ENCODE measurements at regions of chr21 and their contacts with region 1.

Region 1: DNA sequence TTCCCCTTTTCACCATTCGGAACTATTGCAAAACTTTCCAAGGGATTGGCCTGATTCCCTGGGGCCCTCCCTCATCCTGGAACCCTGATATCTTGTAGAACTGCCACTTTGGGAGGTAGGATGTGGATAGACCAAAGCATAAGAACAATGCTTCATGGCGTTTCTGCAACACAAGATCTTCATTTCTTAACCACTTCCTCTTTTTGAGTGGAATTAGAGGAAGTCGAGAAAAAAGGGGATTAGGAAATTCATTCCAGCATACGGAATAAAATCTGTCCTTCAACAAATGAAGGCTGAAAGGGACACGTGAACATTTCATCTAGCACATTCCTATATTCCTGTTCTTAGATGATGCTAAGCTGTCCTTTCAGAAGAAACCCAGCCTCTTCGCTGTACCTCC is 149.3 kb downstream of the HUNK start:
- DNase-seq: no peak
- ATAC-seq: no peak
- H3K4me3 ChIP-seq: no peak overlapping the region
- H3K27ac ChIP-seq: no peak overlapping the region
- H3K4me1 ChIP-seq: no peaks in the 10 kb centered on the region
- H3K27me3 ChIP-seq: no peaks in the 10 kb centered on the region
- CTCF ChIP-seq: no peak

Region 2: GRCh38 chr21:32055305-32055704 is 33.2 kb after region 1 on chr21:
- intact Hi-C with region 1: loop called in 1 of 2 experiments (anchors 1 kb)
- DNase-seq: no peak
- ATAC-seq: no peak
- H3K4me3 ChIP-seq: no peak overlapping the region
- H3K27ac ChIP-seq: no peak overlapping the region
- H3K4me1 ChIP-seq: no peaks in the 10 kb centered on the region
- H3K27me3 ChIP-seq: no peaks in the 10 kb centered on the region
- CTCF ChIP-seq: no peak

Measured in psoas muscle (tissue), 8 donors.